Endothelial cell of umbilical vein (primary cell): ENCODE measurements at regions of chr16 and their contacts with region 1.

Region 1: DNA sequence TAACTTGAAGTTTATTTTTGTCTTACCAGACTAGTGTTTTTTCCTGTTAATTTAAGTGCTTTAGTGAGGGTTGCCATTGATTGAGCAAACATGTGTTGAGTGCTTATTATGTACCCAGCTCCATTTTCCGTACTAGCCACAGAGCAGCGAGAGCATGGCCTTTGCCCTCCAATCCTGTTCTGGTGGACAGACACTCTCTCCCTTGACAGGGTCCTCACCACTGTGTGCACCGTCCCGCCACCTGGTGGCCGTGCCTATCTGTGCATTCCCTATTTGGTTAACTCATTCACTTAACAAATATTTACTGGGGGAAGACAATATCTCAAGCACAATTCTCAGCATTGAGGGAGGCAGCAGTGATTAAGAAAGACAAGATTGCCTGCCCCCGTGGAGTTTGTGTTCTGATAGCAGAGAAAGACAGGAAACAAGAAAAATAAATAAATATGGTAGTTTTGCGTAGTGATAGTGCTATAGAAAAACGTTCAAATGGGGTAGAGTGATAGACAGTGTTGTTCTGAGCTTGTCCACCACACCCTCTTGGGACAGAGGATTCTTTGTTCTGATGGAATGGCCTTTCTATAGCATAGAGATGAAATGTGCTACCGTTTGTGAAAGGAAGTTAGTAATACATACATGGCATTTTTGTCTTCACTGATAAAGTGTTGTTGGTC is 13.0 kb downstream of the CDH13 start:
- DNase-seq: peak; percentile 85
- H3K4me3 ChIP-seq: no peak overlapping the region
- H3K27ac ChIP-seq: peak overlapping the region; percentile 99
- H3K4me1 ChIP-seq: peaks cover 56% of the 10 kb centered on the region
- H3K27me3 ChIP-seq: no peaks in the 10 kb centered on the region
- CTCF ChIP-seq: peak; percentile 80 to 82
- POLR2A ChIP-seq: no peak

Region 2: GRCh38 chr16:82560805-82561325 is 78.9 kb before region 1 on chr16:
- CTCF ChIA-PET with region 1: no interaction called
- POLR2A ChIA-PET with region 1: no interaction called
- dilution Hi-C with region 1: no loop called
- intact Hi-C with region 1: no loop called
- DNase-seq: no peak
- H3K4me3 ChIP-seq: no peak overlapping the region
- H3K27ac ChIP-seq: no peak overlapping the region
- H3K4me1 ChIP-seq: no peaks in the 10 kb centered on the region
- H3K27me3 ChIP-seq: peaks cover 0 to 2% of the 10 kb centered on the region in 2 experiments
- CTCF ChIP-seq: no peak
- POLR2A ChIP-seq: no peak

Region 3: DNA sequence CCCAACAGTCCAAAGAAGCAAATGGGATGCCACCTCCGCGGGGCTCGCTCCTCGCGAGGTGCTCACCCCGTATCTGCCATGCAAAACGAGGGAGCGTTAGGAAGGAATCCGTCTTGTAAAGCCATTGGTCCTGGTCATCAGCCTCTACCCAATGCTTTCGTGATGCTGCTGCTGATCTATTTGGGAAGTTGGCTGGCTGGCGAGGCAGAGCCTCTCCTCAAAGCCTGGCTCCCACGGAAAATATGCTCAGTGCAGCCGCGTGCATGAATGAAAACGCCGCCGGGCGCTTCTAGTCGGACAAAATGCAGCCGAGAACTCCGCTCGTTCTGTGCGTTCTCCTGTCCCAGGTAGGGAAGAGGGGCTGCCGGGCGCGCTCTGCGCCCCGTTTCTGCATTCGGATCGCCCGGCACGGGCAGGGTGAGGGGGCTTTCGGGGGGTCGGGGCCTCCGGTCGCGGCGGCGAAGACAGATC is 13.0 kb before region 1 on chr16 and contains the start of gene CDH13:
- CTCF ChIA-PET with region 1: interaction called, 95 read pairs
- POLR2A ChIA-PET with region 1: interaction called, 3 read pairs
- dilution Hi-C with region 1: no loop called
- intact Hi-C with region 1: loop called (anchors 1 kb)
- DNase-seq: peak; percentile 62
- H3K4me3 ChIP-seq: peak within 1 kb of the TSS; percentile 52 to 82 (median 66)
- H3K27ac ChIP-seq: peak within 1 kb of the TSS; percentile 96
- H3K4me1 ChIP-seq: peaks cover 46% of the 10 kb centered on the region
- H3K27me3 ChIP-seq: peaks cover 0 to 2% of the 10 kb centered on the region in 2 experiments
- CTCF ChIP-seq: no peak
- POLR2A ChIP-seq: no peak
- total RNA-seq, gene CDH13: 98.5 and 124 TPM in 2 replicates

Region 4: GRCh38 chr16:82699711-82700495 is 60.1 kb after region 1 on chr16:
- CTCF ChIA-PET with region 1: interaction called, 19 read pairs
- POLR2A ChIA-PET with region 1: no interaction called
- dilution Hi-C with region 1: no loop called
- intact Hi-C with region 1: loop called (anchors 1 kb)
- DNase-seq: peak; percentile 96
- H3K4me3 ChIP-seq: no peak overlapping the region
- H3K27ac ChIP-seq: peak overlapping the region; percentile 76
- H3K4me1 ChIP-seq: peaks cover 46% of the 10 kb centered on the region
- H3K27me3 ChIP-seq: no peaks in the 10 kb centered on the region
- CTCF ChIP-seq: no peak
- POLR2A ChIP-seq: no peak

Region 5: GRCh38 chr16:82814059-82814458 is 174.3 kb after region 1 on chr16:
- CTCF ChIA-PET with region 1: no interaction called
- POLR2A ChIA-PET with region 1: no interaction called
- dilution Hi-C with region 1: no loop called
- intact Hi-C with region 1: loop called (anchors 5 kb)
- DNase-seq: peak; percentile 46
- H3K4me3 ChIP-seq: no peak overlapping the region
- H3K27ac ChIP-seq: peak overlapping the region; percentile 41
- H3K4me1 ChIP-seq: peaks cover 23% of the 10 kb centered on the region
- H3K27me3 ChIP-seq: no peaks in the 10 kb centered on the region
- CTCF ChIP-seq: no peak
- POLR2A ChIP-seq: no peak

Region 6: GRCh38 chr16:82995924-82996441 is 356.2 kb after region 1 on chr16:
- CTCF ChIA-PET with region 1: no interaction called
- POLR2A ChIA-PET with region 1: no interaction called
- dilution Hi-C with region 1: no loop called
- intact Hi-C with region 1: loop called (anchors 1 kb)
- DNase-seq: peak; percentile 96
- H3K4me3 ChIP-seq: peak overlapping the region in 1 of 3 experiments; percentile 31
- H3K27ac ChIP-seq: peak overlapping the region; percentile 91
- H3K4me1 ChIP-seq: peaks cover 23% of the 10 kb centered on the region
- H3K27me3 ChIP-seq: no peaks in the 10 kb centered on the region
- CTCF ChIP-seq: no peak
- POLR2A ChIP-seq: no peak

Region 7: GRCh38 chr16:83215406-83216001 is 575.7 kb after region 1 on chr16:
- CTCF ChIA-PET with region 1: interaction called, 6 read pairs
- POLR2A ChIA-PET with region 1: no interaction called
- dilution Hi-C with region 1: no loop called
- intact Hi-C with region 1: loop called (anchors 1 kb)
- DNase-seq: peak; percentile 48
- H3K4me3 ChIP-seq: no peak overlapping the region
- H3K27ac ChIP-seq: no peak overlapping the region
- H3K4me1 ChIP-seq: no peaks in the 10 kb centered on the region
- H3K27me3 ChIP-seq: no peaks in the 10 kb centered on the region
- CTCF ChIP-seq: peak; percentile 74 to 78
- POLR2A ChIP-seq: no peak